ENCODE measurements at regions of chr14 and their contacts with region 1.

Region 1: GRCh38 chr14:52473557-52473956 is 78.7 kb downstream of the TXNDC16 start:
- DNase-seq: peak in 1 of 35 experiments; percentile 73
- ATAC-seq: peak in 3 of 4 experiments; percentile 52 to 61 (median 58)
- H3K4me3 ChIP-seq: no peak overlapping the region
- H3K4me3 Mint-ChIP-seq: no peak overlapping the region
- H3K27ac ChIP-seq: no peak overlapping the region
- H3K27ac Mint-ChIP-seq: no peak overlapping the region
- H3K4me1 ChIP-seq: peaks cover 0 to 2% of the 10 kb centered on the region in 2 experiments
- H3K4me1 Mint-ChIP-seq: peaks cover 8 to 23% (median 18%) of the 10 kb centered on the region in 3 donors
- H3K27me3 ChIP-seq: no peaks in the 10 kb centered on the region
- H3K27me3 Mint-ChIP-seq: no peaks in the 10 kb centered on the region

Region 2: GRCh38 chr14:52146504-52146903 is 327.1 kb before region 1 on chr14:
- CTCF ChIA-PET with region 1: no interaction called
- POLR2A ChIA-PET with region 1: no interaction called
- DNase-seq: no peak
- ATAC-seq: no peak
- H3K4me3 ChIP-seq: no peak overlapping the region
- H3K4me3 Mint-ChIP-seq: no peak overlapping the region
- H3K27ac ChIP-seq: no peak overlapping the region
- H3K27ac Mint-ChIP-seq: no peak overlapping the region
- H3K4me1 ChIP-seq: peaks cover 2 to 9% of the 10 kb centered on the region in 2 experiments
- H3K4me1 Mint-ChIP-seq: peaks cover 13 to 36% (median 24%) of the 10 kb centered on the region in 3 donors
- H3K27me3 ChIP-seq: peaks cover 0 to 7% of the 10 kb centered on the region in 2 experiments
- H3K27me3 Mint-ChIP-seq: peaks cover 2 to 4% of the 10 kb centered on the region in 2 donors

Region 3: GRCh38 chr14:52299692-52300278 is 173.8 kb before region 1 on chr14:
- CTCF ChIA-PET with region 1: interaction called, 4 to 17 read pairs
- POLR2A ChIA-PET with region 1: no interaction called
- DNase-seq: peak in 1 of 35 experiments; percentile 70
- ATAC-seq: peak; percentile 44 to 72 (median 63)
- H3K4me3 ChIP-seq: no peak overlapping the region
- H3K4me3 Mint-ChIP-seq: no peak overlapping the region
- H3K27ac ChIP-seq: no peak overlapping the region
- H3K27ac Mint-ChIP-seq: peak overlapping the region; percentile 49 to 51
- H3K4me1 ChIP-seq: peaks cover 3 to 7% of the 10 kb centered on the region in 2 experiments
- H3K4me1 Mint-ChIP-seq: peaks cover 42 to 53% (median 45%) of the 10 kb centered on the region in 3 donors
- H3K27me3 ChIP-seq: no peaks in the 10 kb centered on the region
- H3K27me3 Mint-ChIP-seq: no peaks in the 10 kb centered on the region

Measured in T-cell (primary cell).